ENCODE measurements at regions of chr1 and their contacts with region 1.

Region 1: GRCh38 chr1:181142096-181142958 is 53.8 kb downstream of the IER5 start:
- DNase-seq: peak; percentile 87
- H3K27ac ChIP-seq: peak overlapping the region; percentile 59
- CTCF ChIP-seq: peak; percentile 91

Region 2: GRCh38 chr1:180975551-180975950 is 166.8 kb before region 1 on chr1:
- CTCF ChIA-PET with region 1: no interaction called
- POLR2A ChIA-PET with region 1: no interaction called
- DNase-seq: no peak
- H3K27ac ChIP-seq: no peak overlapping the region
- CTCF ChIP-seq: no peak

Region 3: DNA sequence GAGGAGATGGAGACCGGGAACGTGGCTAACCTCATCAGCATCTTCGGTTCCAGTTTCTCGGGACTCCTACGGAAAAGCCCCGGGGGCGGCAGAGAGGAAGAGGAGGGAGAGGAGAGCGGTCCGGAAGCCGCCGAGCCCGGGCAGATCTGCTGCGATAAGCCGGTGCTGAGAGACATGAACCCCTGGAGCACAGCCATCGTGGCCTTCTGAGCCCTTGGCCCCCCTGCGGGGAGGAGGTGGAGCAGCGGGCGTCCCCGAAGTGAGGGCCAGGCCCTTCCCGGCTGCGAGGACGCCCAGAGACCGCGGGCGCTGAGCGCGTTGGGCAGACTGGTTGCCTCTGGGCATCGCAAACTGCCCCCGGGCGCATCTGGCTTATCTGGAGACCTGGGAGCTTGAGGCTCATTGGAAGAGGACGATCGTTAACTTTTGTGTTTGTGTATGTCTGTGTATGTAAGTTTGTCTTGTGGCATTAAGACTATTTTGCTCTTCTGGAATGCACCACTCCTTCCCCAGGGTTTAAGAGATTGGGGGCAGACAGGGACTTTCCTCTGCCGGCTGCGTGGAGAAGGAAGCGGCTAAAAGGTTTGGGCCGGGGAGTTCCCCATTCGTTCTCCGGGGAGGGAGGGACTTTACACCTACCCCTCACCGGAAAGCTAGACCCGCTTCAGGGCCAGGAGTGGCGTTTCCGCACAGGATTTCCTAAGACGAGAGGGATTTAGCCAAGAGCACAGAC is 52.5 kb before region 1 on chr1:
- CTCF ChIA-PET with region 1: interaction called, 30 read pairs
- POLR2A ChIA-PET with region 1: interaction called, 8 read pairs
- DNase-seq: peak; percentile 58
- H3K27ac ChIP-seq: peak overlapping the region; percentile 92
- CTCF ChIP-seq: no peak

Region 4: DNA sequence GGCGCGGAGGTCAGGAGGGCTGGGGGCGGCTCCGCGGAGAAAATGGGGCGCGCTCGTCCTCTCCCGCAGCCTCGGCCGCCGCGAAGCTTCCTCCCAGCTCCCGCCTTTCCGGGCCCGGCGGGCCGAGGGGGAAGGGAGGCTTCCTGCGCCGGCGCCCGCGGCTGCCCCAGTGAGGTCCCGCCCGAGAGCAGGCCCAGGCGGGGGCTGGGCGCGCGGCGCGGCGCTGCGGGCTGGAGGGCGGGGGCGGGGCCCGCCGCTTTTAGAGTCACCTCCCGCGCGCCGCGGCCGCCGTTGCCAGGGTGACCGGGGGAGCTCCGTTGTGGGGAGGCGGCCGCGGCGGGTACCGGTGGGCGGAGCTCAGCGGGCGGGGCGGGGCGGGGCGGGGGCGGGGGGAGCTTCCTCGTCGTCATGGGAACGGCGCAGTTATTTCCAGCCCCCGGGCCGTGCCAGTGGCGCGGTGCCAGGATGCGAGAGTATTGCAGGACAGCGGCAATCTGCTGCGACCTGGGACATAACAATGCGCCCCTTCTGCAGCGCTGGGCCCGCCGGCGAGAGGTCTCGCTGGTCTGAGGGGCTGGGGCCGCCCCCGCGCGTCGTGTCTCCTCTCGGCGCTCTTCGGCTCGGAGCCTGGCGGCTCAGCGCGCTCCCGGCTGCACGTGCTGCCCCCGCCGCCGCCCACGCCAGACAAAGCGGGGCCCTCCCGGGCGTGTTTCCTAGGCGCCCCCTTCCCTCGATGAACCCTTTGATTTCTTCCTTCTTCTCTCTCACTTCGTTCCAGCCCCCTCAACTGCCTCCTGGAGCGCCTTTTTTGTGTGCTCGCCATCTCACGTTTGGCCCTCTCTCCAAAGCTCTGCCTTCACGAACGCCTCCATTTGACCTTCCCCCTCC is 36.9 kb before region 1 on chr1:
- CTCF ChIA-PET with region 1: interaction called, 63 read pairs
- POLR2A ChIA-PET with region 1: interaction called, 6 read pairs
- DNase-seq: peak; percentile 96
- H3K27ac ChIP-seq: peak overlapping the region; percentile 91
- CTCF ChIP-seq: no peak

Region 5: DNA sequence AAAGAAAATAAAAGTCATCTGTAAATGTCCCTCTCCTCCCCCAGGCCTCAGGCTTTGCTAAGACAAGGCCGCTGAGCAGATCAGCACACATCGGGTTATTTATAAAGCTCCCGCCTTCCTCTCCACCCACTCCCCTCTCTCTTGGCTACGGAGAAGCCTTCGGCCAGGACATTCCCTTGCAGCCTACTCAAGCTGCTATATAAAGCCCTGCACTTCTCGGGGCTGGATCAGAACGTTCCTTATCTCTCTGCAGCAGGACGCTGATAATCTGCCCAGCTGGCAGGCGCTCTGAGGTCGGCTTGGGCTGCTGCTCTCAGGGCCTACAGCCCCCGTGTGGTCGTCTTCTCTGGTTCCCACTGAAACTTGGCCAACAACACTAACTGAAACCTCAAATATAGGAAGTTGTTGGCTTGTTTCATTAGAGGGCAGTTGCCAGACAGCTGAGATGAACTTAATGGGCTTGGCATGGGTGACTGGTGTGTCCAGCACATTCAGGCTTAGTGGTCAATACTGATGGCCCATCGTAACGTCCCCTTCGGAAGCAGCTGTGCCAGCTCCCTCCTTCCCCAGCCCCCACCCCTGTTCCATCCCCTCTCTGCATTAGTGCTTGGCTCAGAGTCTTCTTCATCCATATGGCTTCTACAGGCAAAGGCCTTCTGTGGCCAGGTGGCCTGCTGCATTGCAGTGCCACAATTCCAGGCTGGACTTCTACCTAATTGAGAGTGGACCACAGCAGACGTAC is 10.7 kb after region 1 on chr1:
- CTCF ChIA-PET with region 1: interaction called, 28 read pairs
- POLR2A ChIA-PET with region 1: no interaction called
- DNase-seq: no peak
- H3K27ac ChIP-seq: no peak overlapping the region; the same call in 1 of the 2 replicates
- CTCF ChIP-seq: no peak

Region 6: DNA sequence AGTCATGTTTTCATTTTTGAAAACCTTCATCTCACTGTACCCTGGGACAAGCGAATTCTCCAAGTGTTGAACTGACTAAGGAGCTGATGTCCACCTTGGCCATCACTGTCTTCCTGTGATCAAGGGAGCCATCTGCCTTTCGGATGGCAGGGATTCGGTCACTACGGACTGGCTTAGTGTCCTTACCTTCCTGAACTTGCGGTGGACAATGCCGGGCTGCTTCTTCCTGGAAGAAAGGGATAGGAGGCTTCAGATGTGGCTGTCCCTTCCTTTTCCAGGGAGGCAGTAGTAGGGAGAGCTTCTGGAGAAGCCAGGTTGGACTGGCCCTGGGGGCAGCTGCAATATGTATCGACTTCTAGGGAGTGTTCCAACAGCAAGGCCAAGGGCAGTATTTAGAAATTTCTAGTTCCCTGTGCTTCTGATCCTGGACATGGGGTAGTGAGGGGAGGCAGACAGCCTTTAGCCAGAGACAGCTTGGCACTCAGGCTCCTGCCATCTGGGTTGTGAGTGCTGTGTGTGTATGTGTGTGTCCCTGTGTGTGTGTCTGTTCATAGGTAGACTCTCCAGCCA is 60.7 kb after region 1 on chr1:
- CTCF ChIA-PET with region 1: no interaction called
- POLR2A ChIA-PET with region 1: no interaction called
- DNase-seq: no peak
- H3K27ac ChIP-seq: no peak overlapping the region
- CTCF ChIP-seq: no peak

Measured in RWPE1 (cell line).